Activated CD4-positive, alpha-beta T cell treated with anti-CD3 and anti-CD28 coated beads, Interleukin-2, amount 10 ng/mL, durations not matched to agents 7 days and 5 days (primary cell): ENCODE measurements at regions of chr14 and their contacts with region 1.

Region 1: DNA sequence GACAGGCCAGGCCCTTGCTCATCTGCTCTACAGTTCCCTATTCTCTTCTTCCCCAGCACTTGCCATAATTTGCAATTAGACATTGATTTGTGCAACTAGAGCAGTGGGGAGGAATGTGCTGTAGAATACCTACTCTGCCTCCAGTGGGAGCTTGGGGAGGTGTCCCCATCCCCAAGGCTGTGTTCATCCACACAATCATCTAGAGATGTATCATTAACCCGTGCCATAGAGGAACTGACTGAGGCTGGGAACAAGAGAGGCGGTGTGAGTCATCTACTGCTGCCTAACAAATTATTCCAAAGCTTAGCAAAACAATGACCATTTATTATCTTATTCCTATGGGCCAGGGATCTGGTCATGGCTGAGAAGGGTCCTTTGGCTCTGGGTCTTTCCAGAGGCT is 5.1 kb upstream of the OTUB2 start:
- DNase-seq: no peak
- H3K4me3 Mint-ChIP-seq: no peak overlapping the region
- H3K27ac Mint-ChIP-seq: no peak overlapping the region
- H3K4me1 Mint-ChIP-seq: peaks cover 44% of the 10 kb centered on the region
- H3K27me3 Mint-ChIP-seq: peaks cover 16% of the 10 kb centered on the region

Region 2: GRCh38 chr14:94009767-94010166 is 11.2 kb before region 1 on chr14:
- CTCF ChIA-PET with region 1: interaction called, 25 read pairs
- POLR2A ChIA-PET with region 1: no interaction called
- DNase-seq: no peak
- H3K4me3 Mint-ChIP-seq: no peak overlapping the region
- H3K27ac Mint-ChIP-seq: peak overlapping the region; percentile 48
- H3K4me1 Mint-ChIP-seq: peaks cover 73% of the 10 kb centered on the region
- H3K27me3 Mint-ChIP-seq: peaks cover 6% of the 10 kb centered on the region